ENCODE measurements at regions of chr9 and their contacts with region 1.

Region 1: DNA sequence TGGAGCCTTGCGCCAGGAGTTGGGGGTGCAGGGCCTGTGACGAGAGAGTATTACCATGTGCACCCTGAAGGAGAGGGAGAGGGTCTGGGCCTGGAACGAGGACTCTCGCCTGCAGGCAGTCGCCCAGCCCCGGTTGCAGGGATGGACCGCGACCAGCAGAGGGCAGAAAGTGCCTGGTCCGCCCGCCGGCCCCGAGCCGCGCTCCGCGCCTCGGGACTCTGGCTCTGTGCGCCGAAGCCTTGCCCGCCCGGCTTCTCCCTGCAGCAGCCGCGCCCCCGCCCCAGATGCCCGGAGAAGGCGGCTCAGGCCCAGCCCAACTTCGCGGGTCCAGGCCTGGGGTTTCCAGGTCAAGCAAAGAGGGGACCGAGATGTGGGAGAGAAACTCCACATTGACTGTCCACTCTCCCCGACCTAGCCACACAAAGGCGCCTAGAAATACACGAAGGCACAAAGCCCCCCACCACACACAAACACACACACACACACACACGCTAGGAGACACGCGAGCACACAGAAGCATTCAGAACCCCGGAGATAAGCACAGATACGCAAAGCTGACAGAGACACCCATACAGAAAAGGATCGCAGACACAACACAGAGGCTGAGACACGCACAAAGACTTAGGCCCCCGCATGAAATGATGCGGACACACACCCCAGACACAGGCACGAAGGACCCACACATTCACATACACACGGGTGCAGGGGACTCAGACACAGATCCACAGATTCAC is 2.0 kb upstream of the LMX1B start:
- DNase-seq: peak; percentile 36
- ATAC-seq: peak; percentile 86
- H3K4me3 ChIP-seq: peak overlapping the region in 1 of 3 experiments; percentile 54; a peak in 1 of 6 replicates
- H3K27ac ChIP-seq: no peak overlapping the region
- H3K4me1 ChIP-seq: peaks cover 51% of the 10 kb centered on the region
- H3K27me3 ChIP-seq: peaks cover 37 to 87% of the 10 kb centered on the region in 2 experiments
- CTCF ChIP-seq: peak; percentile 87
- EP300 ChIP-seq: no peak
- POLR2A ChIP-seq: no peak
- RAD21 ChIP-seq: peak; percentile 80

Region 2: GRCh38 chr9:126661521-126662220 is 49.9 kb after region 1 on chr9:
- CTCF ChIA-PET with region 1: no interaction called
- POLR2A ChIA-PET with region 1: no interaction called
- in situ Hi-C with region 1: no loop called
- intact Hi-C with region 1: loop called (anchors 5 kb)
- DNase-seq: peak; percentile 41
- ATAC-seq: peak; percentile 58
- H3K4me3 ChIP-seq: no peak overlapping the region
- H3K27ac ChIP-seq: no peak overlapping the region
- H3K4me1 ChIP-seq: peaks cover 10% of the 10 kb centered on the region; the same call in 1 of the 2 replicates
- H3K27me3 ChIP-seq: peaks cover 2 to 31% of the 10 kb centered on the region in 2 experiments; a peak in 4 of 5 replicates
- CTCF ChIP-seq: peak; percentile 51
- EP300 ChIP-seq: no peak
- POLR2A ChIP-seq: no peak
- RAD21 ChIP-seq: no peak

Region 3: DNA sequence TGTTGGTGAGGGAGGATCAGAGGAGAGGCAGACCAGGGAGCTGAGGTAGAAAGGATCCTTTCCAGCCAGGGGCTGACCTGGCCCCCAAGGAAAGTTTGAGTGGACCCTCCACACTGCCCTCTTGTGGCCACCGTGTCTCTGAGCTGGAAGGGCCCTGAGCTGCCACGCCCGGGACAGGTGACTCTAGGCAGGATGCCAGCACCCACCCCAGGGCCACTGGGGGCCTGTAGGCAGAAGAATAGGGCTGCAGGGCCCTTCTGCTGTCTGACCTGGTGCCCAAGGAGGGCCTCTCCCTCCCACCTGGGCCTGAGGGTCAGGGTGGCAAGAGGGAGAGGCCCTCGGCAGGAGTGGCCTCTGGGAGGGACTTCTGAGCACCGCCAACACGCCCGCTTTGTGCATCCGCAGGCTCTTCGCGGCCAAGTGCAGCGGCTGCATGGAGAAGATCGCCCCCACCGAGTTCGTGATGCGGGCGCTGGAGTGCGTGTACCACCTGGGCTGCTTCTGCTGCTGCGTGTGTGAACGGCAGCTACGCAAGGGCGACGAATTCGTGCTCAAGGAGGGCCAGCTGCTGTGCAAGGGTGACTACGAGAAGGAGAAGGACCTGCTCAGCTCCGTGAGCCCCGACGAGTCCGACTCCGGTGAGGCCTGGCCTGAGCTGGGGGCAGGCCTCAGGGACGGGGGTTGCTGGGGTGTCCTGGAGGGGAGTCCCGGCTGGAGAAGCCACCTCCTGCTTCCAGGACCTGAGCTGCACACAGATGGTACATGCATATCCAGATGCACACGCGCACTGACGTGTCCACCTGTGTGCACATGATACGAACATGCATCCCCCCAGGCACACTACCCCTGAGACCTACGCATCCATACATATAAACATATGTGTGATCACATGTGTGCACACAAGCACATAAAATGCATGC is 78.9 kb after region 1 on chr9:
- CTCF ChIA-PET with region 1: no interaction called
- POLR2A ChIA-PET with region 1: no interaction called
- in situ Hi-C with region 1: loop called (anchors 5 kb)
- intact Hi-C with region 1: loop called (anchors 2 kb)
- DNase-seq: no peak
- ATAC-seq: peak; percentile 75
- H3K4me3 ChIP-seq: no peak overlapping the region
- H3K27ac ChIP-seq: no peak overlapping the region
- H3K4me1 ChIP-seq: no peaks in the 10 kb centered on the region
- H3K27me3 ChIP-seq: peaks cover 10 to 81% of the 10 kb centered on the region in 2 experiments
- CTCF ChIP-seq: peak; percentile 84
- EP300 ChIP-seq: no peak
- POLR2A ChIP-seq: no peak
- RAD21 ChIP-seq: peak; percentile 42; the same call in 1 of the 2 replicates

Region 4: GRCh38 chr9:126781186-126782052 is 169.7 kb after region 1 on chr9:
- CTCF ChIA-PET with region 1: no interaction called
- POLR2A ChIA-PET with region 1: no interaction called
- in situ Hi-C with region 1: loop called (anchors 5 kb)
- intact Hi-C with region 1: loop called (anchors 5 kb)
- DNase-seq: peak; percentile 63
- ATAC-seq: peak; percentile 92
- H3K4me3 ChIP-seq: peak overlapping the region in 1 of 3 experiments; percentile 24; a peak in 1 of 6 replicates
- H3K27ac ChIP-seq: no peak overlapping the region
- H3K4me1 ChIP-seq: peaks cover 8% of the 10 kb centered on the region; the same call in 1 of the 2 replicates
- H3K27me3 ChIP-seq: peaks cover 0 to 35% of the 10 kb centered on the region in 2 experiments; a peak in 2 of 5 replicates
- CTCF ChIP-seq: peak; percentile 94
- EP300 ChIP-seq: no peak
- POLR2A ChIP-seq: no peak
- RAD21 ChIP-seq: peak; percentile 90

Measured in HepG2 (cell line).